AG04449 (cell line): ENCODE measurements at regions of chr6 and their contacts with region 1.

Region 1: GRCh38 chr6:150822932-150823331 is 42.6 kb upstream of the MTHFD1L start:
- DNase-seq: no peak
- H3K4me3 ChIP-seq: no peak overlapping the region
- CTCF ChIP-seq: no peak

Region 2: GRCh38 chr6:151330134-151330696 is 507.3 kb after region 1 on chr6:
- CTCF ChIA-PET with region 1: interaction called, 49 read pairs
- POLR2A ChIA-PET with region 1: no interaction called
- DNase-seq: peak; percentile 69
- H3K4me3 ChIP-seq: no peak overlapping the region
- CTCF ChIP-seq: no peak